Activated CD4-positive, alpha-beta T cell treated with anti-CD3 and anti-CD28 coated beads for 36 hours (primary cell): ENCODE measurements at regions of chr17 and their contacts with region 1.

Region 1: DNA sequence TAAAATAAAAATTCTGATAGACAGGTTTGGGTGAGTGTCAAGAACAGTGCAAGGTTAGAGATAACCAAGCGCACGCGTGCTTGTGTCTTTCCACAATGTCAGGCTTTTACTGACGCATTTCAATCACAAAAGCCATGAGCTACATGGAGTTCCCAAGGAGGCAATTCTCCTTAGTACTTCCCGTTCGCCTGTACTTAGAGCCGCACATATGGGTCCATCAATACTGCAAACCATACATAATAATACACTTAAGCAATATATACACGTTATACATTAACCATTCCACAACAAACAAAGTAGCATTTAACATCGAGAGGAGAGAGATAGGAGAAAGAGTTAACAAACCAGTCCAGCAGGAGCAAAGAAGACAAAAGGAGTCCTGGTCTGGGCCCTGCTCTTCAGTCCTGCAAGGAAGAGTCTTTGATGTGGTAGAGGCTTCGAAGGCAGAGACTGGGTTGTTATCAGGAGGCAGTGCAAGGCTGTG is 11.9 kb upstream of the GPRC5C start:
- DNase-seq: no peak
- ATAC-seq: no peak
- H3K4me3 Mint-ChIP-seq: no peak overlapping the region
- H3K27ac Mint-ChIP-seq: no peak overlapping the region
- H3K4me1 Mint-ChIP-seq: peaks cover 2% of the 10 kb centered on the region
- H3K27me3 Mint-ChIP-seq: peaks cover 5% of the 10 kb centered on the region

Region 2: DNA sequence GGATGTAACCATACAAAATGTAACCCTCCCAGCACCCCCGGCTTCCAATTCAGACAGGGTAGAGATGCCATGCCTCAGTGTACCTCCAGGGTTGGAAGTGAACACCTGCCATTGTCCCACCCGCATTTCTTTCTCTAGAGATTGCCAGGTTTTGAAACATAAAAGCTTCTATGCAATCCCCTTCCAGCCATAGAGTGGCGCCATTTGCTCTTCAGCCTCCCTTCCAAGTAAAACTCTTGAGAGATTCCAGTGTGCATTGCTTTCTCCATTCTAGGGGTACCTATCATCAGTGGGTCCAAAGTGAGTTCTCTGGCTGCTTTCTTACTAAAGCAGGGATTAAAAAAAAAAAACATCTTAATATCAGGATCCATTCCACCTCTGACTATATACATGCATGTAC is 349.6 kb before region 1 on chr17:
- CTCF ChIA-PET with region 1: no interaction called
- POLR2A ChIA-PET with region 1: no interaction called
- intact Hi-C with region 1: no loop called
- DNase-seq: no peak
- ATAC-seq: no peak
- H3K4me3 Mint-ChIP-seq: no peak overlapping the region
- H3K27ac Mint-ChIP-seq: no peak overlapping the region
- H3K4me1 Mint-ChIP-seq: no peaks in the 10 kb centered on the region
- H3K27me3 Mint-ChIP-seq: no peaks in the 10 kb centered on the region

Region 3: GRCh38 chr17:74437702-74438101 is 17.7 kb after region 1 on chr17:
- CTCF ChIA-PET with region 1: interaction called, 12 read pairs
- POLR2A ChIA-PET with region 1: no interaction called
- intact Hi-C with region 1: no loop called
- DNase-seq: no peak
- ATAC-seq: no peak
- H3K4me3 Mint-ChIP-seq: no peak overlapping the region
- H3K27ac Mint-ChIP-seq: no peak overlapping the region
- H3K4me1 Mint-ChIP-seq: no peaks in the 10 kb centered on the region
- H3K27me3 Mint-ChIP-seq: peaks cover 18% of the 10 kb centered on the region